Cardiac septum (tissue), 1 donor: ENCODE measurements at regions of chr15 and their contacts with region 1.

Region 1: DNA sequence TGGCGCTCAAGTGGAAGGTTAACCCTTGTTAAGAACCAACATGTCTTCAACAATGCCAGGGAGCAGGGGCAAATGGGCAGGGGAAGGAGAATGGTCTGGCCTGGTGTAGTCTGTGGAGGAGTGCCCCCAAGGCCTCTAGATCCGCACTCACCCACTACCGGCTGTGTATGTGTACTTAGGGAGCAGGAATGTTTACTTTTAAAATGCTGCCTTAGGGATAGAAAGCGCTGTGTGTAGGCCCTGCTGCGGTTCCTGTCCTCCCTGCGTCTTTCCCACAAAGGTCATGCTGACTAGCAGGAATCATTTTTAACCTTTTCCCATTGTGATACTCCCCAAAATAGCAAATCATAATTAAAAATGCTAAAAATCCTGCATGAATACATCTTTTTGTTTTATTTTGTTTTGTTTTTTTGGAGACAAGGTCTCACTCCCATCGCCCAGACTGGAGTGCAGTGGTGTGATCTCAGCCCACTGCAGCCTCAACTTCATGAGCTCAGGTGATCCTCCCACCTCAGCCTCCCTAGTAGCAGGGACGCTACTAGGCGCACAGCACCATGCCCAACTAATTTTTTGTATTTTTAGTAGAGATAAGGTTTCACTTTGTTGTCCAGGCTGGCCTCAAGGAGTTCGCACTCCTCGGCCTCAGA is 35.9 kb upstream of the CEMIP start:
- DNase-seq: no peak

Region 2: DNA sequence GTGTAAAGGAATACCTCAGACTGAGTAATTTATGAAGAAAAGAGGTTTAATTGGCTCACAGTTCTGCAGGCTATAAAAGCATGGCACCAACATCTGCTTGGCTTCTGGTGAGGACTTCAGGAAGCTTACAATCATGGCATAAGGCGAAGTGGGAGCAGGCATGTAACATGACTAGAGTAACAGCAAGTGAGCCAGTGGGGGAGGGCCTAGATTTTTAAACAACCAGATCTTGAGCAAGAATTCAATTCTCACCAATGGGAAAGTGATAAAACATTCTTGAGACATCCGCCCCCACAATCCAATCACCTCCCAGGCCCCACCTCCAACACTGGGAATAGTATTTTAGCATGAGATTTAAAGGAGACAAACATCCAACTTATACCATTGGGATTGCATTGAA is 728.2 kb before region 1 on chr15:
- intact Hi-C with region 1: no loop called
- DNase-seq: no peak

Region 3: DNA sequence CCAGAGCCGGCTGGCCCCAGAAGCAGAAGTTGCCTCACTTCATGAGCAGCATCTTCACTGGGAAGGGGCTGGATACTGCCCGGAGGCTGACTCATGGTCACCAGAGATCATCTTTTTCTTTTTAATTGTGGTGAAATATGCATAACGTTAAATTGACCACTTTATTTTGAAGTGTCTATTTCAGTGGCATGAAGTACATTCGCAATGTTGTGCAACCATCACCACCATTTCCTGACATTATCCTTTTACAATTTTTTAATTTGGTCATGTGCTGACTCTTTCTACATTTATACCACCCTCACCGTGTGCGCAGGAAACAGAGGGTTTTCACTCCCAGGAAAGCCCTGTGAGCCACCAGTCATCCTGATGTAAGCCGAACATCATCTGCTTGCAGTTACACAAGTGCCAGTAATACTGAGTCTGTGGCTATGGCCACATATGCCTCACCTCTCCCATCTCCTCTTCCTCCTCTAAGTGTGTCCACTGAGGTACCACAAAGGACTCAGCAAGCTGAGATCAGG is 99.8 kb before region 1 on chr15:
- intact Hi-C with region 1: no loop called
- DNase-seq: no peak

Region 4: DNA sequence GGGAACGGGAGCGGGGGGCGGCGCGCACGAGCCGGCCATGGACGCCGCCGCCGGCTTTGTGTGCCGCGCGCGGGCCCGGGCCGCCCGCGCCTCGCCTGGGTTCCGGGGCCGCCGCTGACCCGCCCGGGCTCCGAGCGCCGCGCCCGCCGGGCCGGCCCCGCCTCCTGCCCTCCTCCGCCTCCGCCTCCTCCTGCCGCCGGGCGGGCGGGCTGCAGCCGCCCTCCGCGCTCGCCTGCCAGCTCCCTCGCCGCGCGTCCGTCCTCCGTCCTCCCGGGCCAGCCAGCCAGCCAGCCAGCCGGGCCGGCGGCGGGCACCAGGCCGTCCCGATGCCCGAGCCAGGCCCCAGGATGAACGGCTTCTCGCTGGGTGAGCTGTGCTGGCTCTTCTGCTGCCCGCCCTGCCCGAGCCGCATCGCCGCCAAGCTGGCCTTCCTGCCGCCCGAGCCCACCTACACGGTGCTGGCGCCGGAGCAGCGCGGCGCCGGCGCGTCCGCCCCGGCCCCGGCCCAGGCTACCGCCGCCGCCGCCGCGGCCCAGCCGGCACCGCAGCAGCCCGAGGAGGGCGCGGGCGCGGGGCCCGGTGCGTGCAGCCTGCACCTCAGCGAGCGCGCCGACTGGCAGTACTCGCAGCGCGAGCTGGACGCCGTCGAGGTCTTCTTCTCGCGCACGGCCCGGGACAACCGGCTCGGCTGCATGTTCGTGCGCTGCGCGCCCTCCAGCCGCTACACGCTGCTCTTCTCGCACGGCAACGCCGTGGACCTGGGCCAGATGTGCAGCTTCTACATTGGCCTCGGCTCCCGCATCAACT is 48.0 kb before region 1 on chr15 and contains the start of gene ABHD17C:
- intact Hi-C with region 1: loop called (anchors 10 kb)
- DNase-seq: peak; percentile 80
- total RNA-seq, gene ABHD17C: 8.5 TPM

Region 5: DNA sequence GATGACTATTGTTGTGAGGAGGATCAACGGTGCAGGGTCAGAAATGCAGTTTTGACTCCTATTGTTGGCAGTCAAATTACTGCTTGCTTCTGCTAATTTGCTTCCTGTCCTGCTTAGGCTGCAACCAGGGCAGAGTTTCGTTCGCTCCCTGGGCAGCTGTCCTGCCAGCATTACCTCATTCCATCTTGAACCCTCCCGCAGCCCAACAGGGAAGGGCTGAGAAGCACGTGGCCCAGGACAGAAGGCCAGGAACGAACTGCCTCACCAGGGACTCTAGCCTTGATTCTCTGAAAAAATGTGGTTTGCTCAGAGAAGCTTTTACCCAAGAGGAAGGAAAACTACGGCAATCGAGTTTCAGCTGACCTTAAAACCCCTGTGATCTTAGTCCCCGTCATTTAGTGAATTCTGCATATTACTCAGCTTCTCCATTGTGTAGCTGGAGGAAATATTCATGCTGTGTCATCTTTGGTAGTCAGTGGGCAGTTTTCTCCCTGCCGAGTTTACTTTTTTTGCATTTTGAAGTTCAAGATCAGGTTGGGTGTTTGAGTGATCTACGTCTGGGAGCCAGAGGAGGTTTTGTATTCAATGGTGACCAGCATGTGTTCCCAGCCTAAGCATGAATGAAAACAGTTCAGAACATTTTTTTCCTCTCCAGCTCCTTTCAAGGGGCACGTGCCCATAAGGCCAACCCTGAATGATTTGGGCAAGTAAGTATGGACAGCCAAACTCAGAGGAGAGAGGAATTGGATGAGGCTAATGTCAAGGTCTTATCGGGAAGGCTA is 280.4 kb after region 1 on chr15:
- intact Hi-C with region 1: no loop called
- DNase-seq: peak; percentile 86